Activated CD4-positive, alpha-beta T cell treated with anti-CD3 and anti-CD28 coated beads for 36 hours (primary cell): ENCODE measurements at regions of chr21 and their contacts with region 1.

Region 1: GRCh38 chr21:15749082-15749860 is 19.5 kb downstream of the USP25 start:
- DNase-seq: no peak
- ATAC-seq: no peak
- H3K4me3 Mint-ChIP-seq: no peak overlapping the region
- H3K27ac Mint-ChIP-seq: peak overlapping the region; percentile 30
- H3K4me1 Mint-ChIP-seq: peaks cover 56% of the 10 kb centered on the region
- H3K27me3 Mint-ChIP-seq: no peaks in the 10 kb centered on the region

Region 2: DNA sequence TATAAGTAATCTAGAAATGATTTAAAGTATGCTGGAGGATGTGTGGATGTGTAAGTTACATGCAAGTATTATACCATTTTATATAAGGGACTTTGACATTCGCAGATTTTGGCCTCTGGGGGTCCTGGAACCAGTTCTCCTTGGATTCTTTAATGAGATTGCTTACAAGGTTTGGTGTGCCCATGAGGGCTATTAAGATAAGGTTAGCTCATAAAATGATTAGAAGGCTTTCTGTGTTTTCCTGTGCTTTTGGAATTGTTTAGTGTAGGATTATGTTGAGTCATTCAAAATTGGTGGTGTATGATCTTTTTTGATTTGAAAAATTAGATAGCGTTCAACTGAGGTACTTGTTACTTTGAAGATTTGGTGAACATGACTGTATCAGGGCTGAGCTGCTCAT is 13.9 kb before region 1 on chr21:
- CTCF ChIA-PET with region 1: interaction called, 3 read pairs
- POLR2A ChIA-PET with region 1: no interaction called
- intact Hi-C with region 1: loop called (anchors 2 kb)
- DNase-seq: no peak
- ATAC-seq: no peak
- H3K4me3 Mint-ChIP-seq: peak overlapping the region; percentile 53
- H3K27ac Mint-ChIP-seq: peak overlapping the region; percentile 66
- H3K4me1 Mint-ChIP-seq: peaks cover 77% of the 10 kb centered on the region
- H3K27me3 Mint-ChIP-seq: no peaks in the 10 kb centered on the region